ENCODE measurements at regions of chr5 and their contacts with region 1.

Region 1: GRCh38 chr5:136212252-136212721 is 19.3 kb upstream of the SMIM32 start:
- DNase-seq: peak; percentile 37
- H3K4me3 ChIP-seq: no peak overlapping the region
- H3K27ac ChIP-seq: no peak overlapping the region
- H3K4me1 ChIP-seq: no peaks in the 10 kb centered on the region
- H3K27me3 ChIP-seq: peaks cover 3 to 5% of the 10 kb centered on the region in 2 experiments
- CTCF ChIP-seq: peak; percentile 85 to 94
- POLR2A ChIP-seq: no peak

Region 2: DNA sequence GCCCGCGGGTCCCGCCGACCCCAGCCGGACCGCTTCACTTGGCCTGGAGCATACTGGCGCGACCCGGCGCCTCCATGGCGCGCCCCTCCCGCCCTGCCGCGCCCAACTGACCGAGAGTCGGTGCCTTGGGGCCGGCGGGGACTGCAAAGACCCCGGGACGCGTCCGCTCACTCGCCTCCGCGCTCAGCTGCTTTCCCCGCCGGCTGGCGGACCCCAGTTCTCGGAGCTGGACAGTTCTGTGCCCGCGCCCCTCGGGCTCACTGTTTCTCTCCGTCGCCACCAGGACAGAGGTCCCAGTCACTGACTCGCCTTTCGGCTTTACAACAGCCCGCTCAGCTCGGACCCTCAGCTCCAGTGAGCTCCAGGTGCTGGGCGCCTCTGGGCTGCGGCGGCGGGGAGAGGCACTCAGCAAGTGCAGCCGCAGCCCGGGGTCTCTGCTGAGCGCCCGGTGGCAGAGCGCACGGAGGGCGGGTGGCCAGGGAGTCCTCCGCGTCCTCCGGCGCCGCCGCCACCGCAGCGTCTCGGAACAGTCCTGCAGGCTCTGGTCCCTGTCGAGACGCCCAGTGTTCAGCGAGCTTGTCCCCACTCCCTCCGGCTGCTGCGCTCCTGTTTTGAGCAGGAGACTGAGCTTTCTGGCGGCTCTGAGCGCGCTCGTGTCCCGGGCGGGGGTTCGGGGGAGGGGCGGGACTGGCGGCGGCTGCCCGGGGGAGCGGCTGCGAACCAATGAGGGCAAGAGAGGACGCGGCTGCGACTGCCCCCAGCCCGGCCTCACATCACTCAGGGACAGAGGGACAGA is 19.6 kb before region 1 on chr5 and contains the start of gene SMIM32:
- CTCF ChIA-PET with region 1: interaction called, 10 read pairs
- POLR2A ChIA-PET with region 1: no interaction called
- dilution Hi-C with region 1: no loop called
- intact Hi-C with region 1: no loop called
- DNase-seq: peak; percentile 2
- H3K4me3 ChIP-seq: peak within 1 kb of the TSS in 2 of 3 experiments; percentile 10 to 28
- H3K27ac ChIP-seq: no peak within 1 kb of the TSS
- H3K4me1 ChIP-seq: peaks cover 4% of the 10 kb centered on the region
- H3K27me3 ChIP-seq: peaks cover 35 to 43% of the 10 kb centered on the region in 2 experiments
- CTCF ChIP-seq: no peak
- POLR2A ChIP-seq: no peak
- total RNA-seq, gene SMIM32: not detected in 2 replicates

Region 3: DNA sequence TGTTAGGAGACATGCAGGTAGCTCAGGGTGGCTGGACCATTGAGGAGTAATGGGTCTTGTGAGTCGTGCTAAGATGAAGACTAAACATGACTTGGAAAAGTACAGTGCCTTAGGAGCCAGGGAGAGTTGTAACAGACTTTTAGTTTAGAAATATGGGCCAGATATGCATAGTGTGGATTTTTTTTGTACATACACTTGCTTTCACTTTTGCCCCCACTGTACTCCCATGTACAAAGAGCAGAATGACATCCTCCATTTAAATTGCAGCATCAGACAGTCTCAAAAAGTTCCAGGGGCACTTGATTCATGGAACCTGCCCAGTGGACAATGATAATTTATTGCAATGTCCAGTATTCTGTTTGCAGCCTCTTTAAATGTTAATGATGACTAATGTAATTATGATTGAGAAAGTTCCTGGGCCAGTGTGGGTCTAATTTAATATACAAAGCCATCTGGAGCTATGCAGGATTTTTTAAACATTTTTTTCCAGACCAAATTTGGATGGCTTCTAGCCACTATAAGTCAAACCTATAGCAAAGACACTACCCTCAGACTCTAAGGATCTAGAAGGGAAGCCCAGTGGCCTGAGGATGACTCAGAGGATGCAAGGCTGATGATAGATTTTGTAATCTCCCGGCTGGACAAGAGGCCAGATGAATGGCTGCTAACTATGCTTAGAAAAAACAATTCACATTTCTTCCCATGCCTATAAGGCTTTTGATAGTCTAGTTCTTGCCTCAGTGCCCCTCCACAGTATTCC is 73.0 kb after region 1 on chr5:
- CTCF ChIA-PET with region 1: no interaction called
- POLR2A ChIA-PET with region 1: no interaction called
- dilution Hi-C with region 1: no loop called
- intact Hi-C with region 1: no loop called
- DNase-seq: no peak
- H3K4me3 ChIP-seq: no peak overlapping the region
- H3K27ac ChIP-seq: no peak overlapping the region
- H3K4me1 ChIP-seq: no peaks in the 10 kb centered on the region
- H3K27me3 ChIP-seq: no peaks in the 10 kb centered on the region
- CTCF ChIP-seq: no peak
- POLR2A ChIP-seq: no peak